CD8-positive, alpha-beta memory T cell (primary cell): ENCODE measurements at regions of chr11 and their contacts with region 1.

Region 1: GRCh38 chr11:111283945-111284481 is 14.3 kb upstream of the POU2AF3 start:
- DNase-seq: no peak
- H3K4me3 ChIP-seq: no peak overlapping the region
- H3K4me3 Mint-ChIP-seq: no peak overlapping the region
- H3K27ac ChIP-seq: no peak overlapping the region
- H3K27ac Mint-ChIP-seq: peak overlapping the region in 1 of 8 donors; percentile 66
- H3K4me1 ChIP-seq: no peaks in the 10 kb centered on the region
- H3K4me1 Mint-ChIP-seq: no peaks in the 10 kb centered on the region
- H3K27me3 ChIP-seq: no peaks in the 10 kb centered on the region
- H3K27me3 Mint-ChIP-seq: peaks cover 0 to 3% of the 10 kb centered on the region in 2 donors

Region 2: GRCh38 chr11:111422494-111423249 is 138.7 kb after region 1 on chr11:
- CTCF ChIA-PET with region 1: interaction called, 15 read pairs
- POLR2A ChIA-PET with region 1: no interaction called
- DNase-seq: peak in 1 of 5 donors; percentile 38
- H3K4me3 ChIP-seq: no peak overlapping the region
- H3K4me3 Mint-ChIP-seq: no peak overlapping the region
- H3K27ac ChIP-seq: no peak overlapping the region
- H3K27ac Mint-ChIP-seq: no peak overlapping the region
- H3K4me1 ChIP-seq: no peaks in the 10 kb centered on the region
- H3K4me1 Mint-ChIP-seq: peaks cover 2 to 4% (median 3%) of the 10 kb centered on the region in 3 donors
- H3K27me3 ChIP-seq: no peaks in the 10 kb centered on the region
- H3K27me3 Mint-ChIP-seq: peaks cover 7 to 11% of the 10 kb centered on the region in 2 donors